Activated B cell treated with CpG ODN at 0.5 μM for 24 hours (primary cell): ENCODE measurements at regions of chr19 and their contacts with region 1.

Region 1: DNA sequence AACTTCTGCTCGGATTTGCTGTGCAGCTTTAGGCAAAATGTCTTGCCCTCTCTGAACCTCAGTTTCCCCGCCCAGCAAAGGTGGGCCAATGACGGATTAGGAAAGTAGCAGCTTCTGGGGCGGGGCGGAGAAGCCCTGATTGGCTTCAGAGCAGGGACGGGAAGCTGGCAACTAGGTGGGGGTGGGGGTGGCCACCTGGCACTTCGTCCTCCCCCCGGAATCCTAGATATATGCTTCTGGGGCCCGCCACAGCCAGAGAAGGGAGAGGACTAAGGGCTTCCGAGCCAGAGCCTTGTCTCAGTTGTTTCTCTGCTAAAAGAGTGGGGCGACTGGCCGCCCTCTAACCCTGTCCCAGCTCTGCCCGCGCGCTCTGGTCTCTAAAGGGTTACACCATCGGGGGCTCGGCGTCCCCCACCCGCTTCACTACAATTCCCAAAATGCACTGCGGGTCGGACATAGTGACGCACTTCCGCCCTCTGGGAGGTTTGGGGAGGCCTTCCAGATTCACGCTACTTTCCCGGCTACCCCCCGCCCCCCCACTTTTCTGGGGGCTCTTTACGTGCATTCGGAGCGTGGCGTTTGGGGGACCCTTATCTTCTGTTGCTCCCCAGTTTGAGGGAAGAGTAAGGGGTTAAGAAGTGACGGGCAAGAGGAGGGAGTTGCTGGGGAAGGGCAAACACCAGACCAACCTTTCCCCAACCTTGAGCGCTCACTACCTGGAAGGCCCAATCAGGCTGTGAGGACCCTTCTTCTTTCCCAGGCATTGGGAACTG is 672 bp upstream of the IRF2BP1 start:
- DNase-seq: peak; percentile 86
- ATAC-seq: peak; percentile 65
- H3K4me3 Mint-ChIP-seq: peak overlapping the region; percentile 92
- H3K27ac Mint-ChIP-seq: peak overlapping the region; percentile 94
- H3K4me1 Mint-ChIP-seq: peaks cover 30% of the 10 kb centered on the region
- H3K27me3 Mint-ChIP-seq: no peaks in the 10 kb centered on the region
- CTCF ChIP-seq: no peak

Region 2: DNA sequence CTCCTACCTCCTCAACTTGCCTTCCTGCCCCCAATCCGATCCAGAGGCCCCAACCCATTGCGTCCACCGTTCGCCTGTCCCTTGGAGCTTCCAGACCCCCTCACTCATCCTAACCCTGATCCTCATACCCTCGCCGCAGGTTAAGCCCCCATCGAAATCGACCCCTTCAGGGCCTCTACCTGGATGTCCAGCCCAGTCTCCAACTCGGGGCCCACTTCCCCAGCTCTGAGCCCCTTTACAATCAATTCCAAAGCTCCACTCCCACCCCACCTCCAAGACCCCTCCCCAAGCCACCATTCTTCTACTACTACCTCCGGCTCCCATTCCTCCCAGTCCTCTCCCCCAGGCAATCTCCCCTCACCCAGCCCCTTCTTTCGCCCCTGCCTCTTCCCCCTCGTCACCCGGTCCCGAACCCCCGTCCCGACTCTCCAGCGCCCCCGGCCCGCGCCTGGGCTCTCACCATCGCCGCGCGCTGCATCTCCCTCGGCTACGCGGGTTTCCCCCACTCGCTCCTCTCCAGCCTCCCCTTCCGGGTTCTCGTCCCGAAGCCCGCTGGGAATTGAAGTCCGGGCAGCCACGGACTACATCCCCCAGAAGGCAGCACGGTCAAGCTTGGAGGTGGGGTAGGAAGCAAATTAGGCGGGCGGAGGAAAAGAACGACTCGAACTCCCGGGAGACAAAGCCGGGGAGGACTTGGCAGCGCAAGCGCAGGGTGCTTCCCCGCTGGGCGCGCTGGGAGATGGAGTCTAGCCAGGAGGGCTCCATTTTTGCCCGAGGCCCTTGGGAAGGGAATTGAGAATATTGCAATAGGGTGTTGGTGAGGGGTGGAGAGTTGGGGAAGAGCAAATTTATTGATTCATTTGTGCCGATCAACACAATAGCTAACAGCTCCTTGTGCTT is 156.0 kb before region 1 on chr19 and contains the start of gene FBXO46:
- CTCF ChIA-PET with region 1: no interaction called
- POLR2A ChIA-PET with region 1: interaction called, 6 read pairs
- intact Hi-C with region 1: loop called (anchors 2 kb)
- DNase-seq: peak; percentile 86
- ATAC-seq: peak; percentile 98
- H3K4me3 Mint-ChIP-seq: peak within 1 kb of the TSS; percentile 95
- H3K27ac Mint-ChIP-seq: peak within 1 kb of the TSS; percentile 93
- H3K4me1 Mint-ChIP-seq: peaks cover 25% of the 10 kb centered on the region
- H3K27me3 Mint-ChIP-seq: no peaks in the 10 kb centered on the region
- CTCF ChIP-seq: no peak
- total RNA-seq, gene FBXO46: 36.3 and 44.0 TPM in 2 replicates

Region 3: GRCh38 chr19:45817010-45817724 is 69.4 kb before region 1 on chr19:
- CTCF ChIA-PET with region 1: interaction called, 4 read pairs
- POLR2A ChIA-PET with region 1: interaction called, 7 read pairs
- intact Hi-C with region 1: loop called (anchors 1 kb)
- DNase-seq: peak; percentile 94
- ATAC-seq: peak; percentile 100
- H3K4me3 Mint-ChIP-seq: no peak overlapping the region
- H3K27ac Mint-ChIP-seq: peak overlapping the region; percentile 68
- H3K4me1 Mint-ChIP-seq: peaks cover 9% of the 10 kb centered on the region
- H3K27me3 Mint-ChIP-seq: no peaks in the 10 kb centered on the region
- CTCF ChIP-seq: peak; percentile 65

Region 4: GRCh38 chr19:45902651-45903625 is 16.3 kb after region 1 on chr19:
- CTCF ChIA-PET with region 1: interaction called, 3 read pairs
- POLR2A ChIA-PET with region 1: interaction called, 60 read pairs
- intact Hi-C with region 1: loop called (anchors 1 kb)
- DNase-seq: peak; percentile 99
- ATAC-seq: peak; percentile 82
- H3K4me3 Mint-ChIP-seq: peak overlapping the region; percentile 90
- H3K27ac Mint-ChIP-seq: peak overlapping the region; percentile 82
- H3K4me1 Mint-ChIP-seq: peaks cover 24% of the 10 kb centered on the region
- H3K27me3 Mint-ChIP-seq: no peaks in the 10 kb centered on the region
- CTCF ChIP-seq: no peak

Region 5: DNA sequence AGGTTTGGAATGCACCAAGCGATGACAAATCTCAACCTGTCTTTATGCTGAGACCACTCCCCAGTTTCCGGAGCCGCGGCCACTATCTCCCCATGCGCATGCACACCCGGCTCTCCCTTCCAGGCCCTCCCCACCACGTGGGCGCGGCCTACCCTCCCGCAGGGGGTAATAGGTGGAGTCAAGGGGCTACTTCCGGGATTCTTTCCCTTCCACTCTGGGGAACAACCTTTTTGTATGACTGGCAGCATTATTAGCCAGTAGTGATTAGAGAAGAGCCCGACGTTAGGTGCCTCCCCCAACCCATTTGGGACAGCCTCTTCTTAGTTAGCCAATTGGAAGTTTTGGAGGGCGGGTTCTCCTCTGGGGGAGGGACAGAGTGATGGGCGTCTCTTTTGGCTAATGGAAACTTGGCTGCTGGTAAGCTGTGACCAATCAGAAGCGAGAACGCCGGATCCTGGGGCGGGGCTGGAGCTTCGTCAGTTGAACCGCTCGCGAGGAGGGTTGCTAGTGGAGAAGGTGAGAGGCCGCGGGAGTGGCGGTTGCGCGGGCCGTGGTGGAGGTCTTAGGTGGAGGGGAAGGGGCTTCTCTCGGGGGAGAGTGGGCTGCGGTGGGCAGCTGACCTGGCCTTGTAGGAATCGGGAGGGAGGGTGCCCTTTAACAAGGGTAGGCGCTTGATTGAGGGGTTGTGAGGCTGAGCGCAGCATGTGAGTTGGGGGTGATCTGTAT is 108.5 kb after region 1 on chr19 and contains the start of gene CCDC61:
- CTCF ChIA-PET with region 1: no interaction called
- POLR2A ChIA-PET with region 1: interaction called, 4 read pairs
- intact Hi-C with region 1: loop called (anchors 1 kb)
- DNase-seq: peak; percentile 85
- ATAC-seq: peak; percentile 94
- H3K4me3 Mint-ChIP-seq: no peak within 1 kb of the TSS
- H3K27ac Mint-ChIP-seq: no peak within 1 kb of the TSS
- H3K4me1 Mint-ChIP-seq: peaks cover 23% of the 10 kb centered on the region
- H3K27me3 Mint-ChIP-seq: peaks cover 21% of the 10 kb centered on the region
- CTCF ChIP-seq: no peak
- total RNA-seq, gene CCDC61: 24.9 and 26.9 TPM in 2 replicates

Region 6: GRCh38 chr19:46016426-46017094 is 129.9 kb after region 1 on chr19:
- CTCF ChIA-PET with region 1: no interaction called
- POLR2A ChIA-PET with region 1: no interaction called
- intact Hi-C with region 1: loop called (anchors 5 kb)
- DNase-seq: peak; percentile 74
- ATAC-seq: peak; percentile 82
- H3K4me3 Mint-ChIP-seq: peak overlapping the region; percentile 85
- H3K27ac Mint-ChIP-seq: peak overlapping the region; percentile 8
- H3K4me1 Mint-ChIP-seq: peaks cover 19% of the 10 kb centered on the region
- H3K27me3 Mint-ChIP-seq: peaks cover 12% of the 10 kb centered on the region
- CTCF ChIP-seq: no peak

Region 7: DNA sequence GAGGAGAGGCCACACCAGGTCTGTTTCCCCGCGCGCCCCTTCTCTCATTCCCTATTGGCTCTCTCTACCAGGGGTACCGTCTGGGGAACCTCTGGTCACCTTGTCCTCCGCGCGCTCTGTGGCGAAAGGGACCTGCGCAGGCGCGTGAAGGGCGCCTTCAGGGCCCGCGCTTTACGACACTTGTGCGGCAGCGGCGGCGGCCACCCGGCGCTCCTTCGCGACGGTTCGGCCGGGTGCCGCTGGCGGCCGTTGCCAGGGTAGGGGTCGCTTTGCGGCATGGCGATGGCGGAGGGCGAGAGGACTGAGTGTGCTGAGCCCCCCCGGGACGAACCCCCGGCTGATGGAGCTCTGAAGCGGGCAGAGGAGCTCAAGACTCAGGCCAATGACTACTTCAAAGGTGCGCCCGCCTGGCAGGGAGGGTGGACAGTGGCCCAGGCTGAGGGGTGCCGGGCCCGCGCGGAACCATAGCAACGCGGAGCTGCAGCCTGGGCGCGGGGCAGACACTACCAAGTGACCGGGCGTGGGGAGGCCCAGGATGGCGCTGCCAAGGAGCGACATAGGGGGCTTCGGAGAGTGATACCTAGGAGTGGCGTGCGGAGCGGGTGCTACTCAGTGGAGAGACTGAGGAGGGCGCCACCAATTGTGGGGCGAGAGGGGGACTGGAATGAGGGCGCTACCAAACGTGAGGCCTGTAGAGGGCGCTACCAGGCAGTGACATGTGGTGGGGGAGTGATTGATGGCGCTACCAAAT is 460.4 kb after region 1 on chr19 and contains the start of gene PPP5C:
- CTCF ChIA-PET with region 1: no interaction called
- POLR2A ChIA-PET with region 1: no interaction called
- intact Hi-C with region 1: loop called (anchors 10 kb)
- DNase-seq: peak; percentile 84
- ATAC-seq: peak; percentile 81
- H3K4me3 Mint-ChIP-seq: peak within 1 kb of the TSS; percentile 95
- H3K27ac Mint-ChIP-seq: peak within 1 kb of the TSS; percentile 88
- H3K4me1 Mint-ChIP-seq: peaks cover 54% of the 10 kb centered on the region
- H3K27me3 Mint-ChIP-seq: peaks cover 3% of the 10 kb centered on the region
- CTCF ChIP-seq: no peak
- total RNA-seq, gene PPP5C: 49.1 and 57.7 TPM in 2 replicates